ENCODE measurements at regions of chr1 and their contacts with region 1.

Region 1: DNA sequence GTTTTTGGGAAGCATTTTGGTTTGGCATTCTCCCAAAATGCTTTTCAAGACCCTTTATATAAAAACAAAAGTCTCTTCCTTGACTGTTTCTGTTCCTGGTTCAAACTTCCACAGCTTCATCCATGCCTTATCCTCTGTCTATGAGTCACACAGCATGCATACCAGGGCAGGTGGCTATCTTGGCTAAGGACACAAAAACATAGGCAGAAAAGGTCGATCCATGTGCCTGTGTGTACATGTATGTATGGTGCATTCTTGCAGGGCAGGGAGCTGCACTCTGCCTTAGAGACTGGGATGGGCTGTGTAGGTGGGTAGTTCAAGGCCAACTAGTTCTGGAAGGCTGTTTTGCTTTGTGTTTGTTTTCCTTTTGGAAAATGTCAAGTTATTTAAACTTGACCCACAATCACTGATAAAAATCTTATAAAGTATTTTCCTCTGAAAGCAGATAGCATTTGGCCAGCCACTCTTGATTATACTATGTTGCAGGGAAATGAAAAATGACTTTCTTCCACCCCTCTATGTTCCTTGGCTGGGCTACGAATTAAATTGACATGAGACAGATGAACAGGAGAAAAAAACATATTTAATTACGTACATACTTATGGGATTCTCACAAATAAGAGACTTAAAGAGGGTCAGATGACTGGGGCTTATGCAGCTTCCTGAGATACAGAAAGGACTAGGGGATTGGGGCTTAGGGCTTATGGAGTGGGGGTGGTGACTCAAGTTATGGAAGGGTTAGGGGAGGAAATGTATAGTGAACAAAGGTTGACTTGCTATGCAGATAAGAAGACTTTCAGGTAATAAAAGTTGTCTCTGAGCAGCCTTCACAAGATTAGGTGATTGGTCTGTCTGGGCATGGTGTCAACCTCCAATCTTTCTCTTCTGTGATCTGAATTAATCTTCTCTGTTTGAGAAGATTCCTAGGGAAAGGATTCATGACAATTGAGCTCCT is 436.8 kb downstream of the SIPA1L2 start:
- DNase-seq: no peak
- ATAC-seq: no peak
- H3K4me3 ChIP-seq: no peak overlapping the region
- H3K27ac ChIP-seq: no peak overlapping the region
- H3K4me1 ChIP-seq: peaks cover 0 to 3% (median 0%) of the 10 kb centered on the region in 9 donors
- H3K27me3 ChIP-seq: no peaks in the 10 kb centered on the region
- CTCF ChIP-seq: no peak

Region 2: DNA sequence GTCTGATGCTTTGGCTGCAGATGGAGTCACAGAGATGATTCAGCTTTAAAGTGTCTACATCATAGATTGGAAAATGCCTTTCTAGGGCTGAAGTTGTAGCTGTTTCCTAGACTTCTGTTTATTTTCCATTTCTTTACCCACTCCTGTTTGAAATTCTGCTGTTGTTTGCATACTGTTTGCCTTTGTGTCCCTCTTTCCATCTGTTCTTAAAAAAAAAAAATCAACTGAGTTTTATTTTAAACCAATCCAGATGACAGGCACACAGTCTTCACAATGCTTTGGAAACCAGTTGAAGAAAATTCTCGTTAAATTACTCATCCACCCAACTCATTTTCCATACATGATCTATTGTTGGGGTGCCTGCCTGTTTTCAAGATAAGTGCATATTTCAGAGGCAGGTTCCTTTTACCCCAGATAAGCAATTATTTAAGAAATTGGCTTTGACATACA is 320.6 kb before region 1 on chr1:
- intact Hi-C with region 1: loop called in 1 of 10 experiments (anchors 10 kb)
- DNase-seq: no peak
- ATAC-seq: no peak
- H3K4me3 ChIP-seq: no peak overlapping the region
- H3K27ac ChIP-seq: no peak overlapping the region
- H3K4me1 ChIP-seq: peaks cover under 1 to 20% (median 6%) of the 10 kb centered on the region in 9 donors
- H3K27me3 ChIP-seq: no peaks in the 10 kb centered on the region
- CTCF ChIP-seq: no peak

Region 3: GRCh38 chr1:232385221-232385620 is 192.1 kb after region 1 on chr1:
- intact Hi-C with region 1: no loop called
- DNase-seq: no peak
- ATAC-seq: peak in 4 of 8 donors; percentile 10 to 40 (median 24)
- H3K4me3 ChIP-seq: no peak overlapping the region
- H3K27ac ChIP-seq: no peak overlapping the region
- H3K4me1 ChIP-seq: peaks cover 0 to 12% (median 0%) of the 10 kb centered on the region in 9 donors
- H3K27me3 ChIP-seq: no peaks in the 10 kb centered on the region
- CTCF ChIP-seq: no peak

Measured in heart right ventricle (tissue), 16 donors.